Right lobe of liver (tissue), 6 donors: ENCODE measurements at regions of chr1 and their contacts with region 1.

Region 1: DNA sequence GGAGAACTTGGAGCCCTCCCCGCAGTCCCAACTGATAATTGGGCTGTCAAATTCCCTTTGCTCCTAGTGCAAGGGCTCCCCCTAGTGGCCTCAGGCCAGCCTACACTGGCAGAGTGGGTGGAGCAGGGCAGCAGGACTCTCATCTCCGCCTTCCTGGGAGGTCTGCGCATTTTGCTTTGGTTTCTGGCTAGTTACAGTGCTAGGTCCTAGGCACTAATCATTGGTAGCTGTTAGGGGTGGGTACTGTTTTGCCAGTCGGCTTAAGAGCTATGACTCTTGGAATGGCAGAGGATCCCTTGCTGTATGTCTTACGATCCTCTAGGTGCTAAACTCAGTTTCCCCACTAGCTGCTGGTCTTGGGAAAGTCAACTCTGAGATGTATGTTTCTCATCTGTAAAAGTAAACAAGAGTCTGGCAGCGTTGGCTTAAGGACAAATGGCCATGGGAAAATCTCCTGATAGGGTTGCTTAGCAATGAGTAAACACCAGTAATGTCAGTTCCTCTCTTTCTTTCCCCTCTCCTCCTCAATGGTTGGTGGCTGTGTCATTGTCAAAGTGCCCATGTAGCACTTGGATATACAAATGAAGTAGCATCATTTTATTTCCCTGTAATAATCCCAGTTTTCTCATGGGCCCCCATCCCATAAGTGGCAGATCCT is 2.1 kb upstream of the FYB2 start:
- DNase-seq: peak; percentile 86 to 92 (median 88)
- ATAC-seq: peak; percentile 53 to 67 (median 62)
- H3K4me3 ChIP-seq: no peak overlapping the region
- H3K27ac ChIP-seq: peak overlapping the region in 1 of 3 donors; percentile 95
- H3K4me1 ChIP-seq: peaks cover 0 to 25% (median 11%) of the 10 kb centered on the region in 4 donors
- H3K27me3 ChIP-seq: no peaks in the 10 kb centered on the region
- CTCF ChIP-seq: peak; percentile 95 to 99 (median 98)
- POLR2A ChIP-seq: no peak

Region 2: DNA sequence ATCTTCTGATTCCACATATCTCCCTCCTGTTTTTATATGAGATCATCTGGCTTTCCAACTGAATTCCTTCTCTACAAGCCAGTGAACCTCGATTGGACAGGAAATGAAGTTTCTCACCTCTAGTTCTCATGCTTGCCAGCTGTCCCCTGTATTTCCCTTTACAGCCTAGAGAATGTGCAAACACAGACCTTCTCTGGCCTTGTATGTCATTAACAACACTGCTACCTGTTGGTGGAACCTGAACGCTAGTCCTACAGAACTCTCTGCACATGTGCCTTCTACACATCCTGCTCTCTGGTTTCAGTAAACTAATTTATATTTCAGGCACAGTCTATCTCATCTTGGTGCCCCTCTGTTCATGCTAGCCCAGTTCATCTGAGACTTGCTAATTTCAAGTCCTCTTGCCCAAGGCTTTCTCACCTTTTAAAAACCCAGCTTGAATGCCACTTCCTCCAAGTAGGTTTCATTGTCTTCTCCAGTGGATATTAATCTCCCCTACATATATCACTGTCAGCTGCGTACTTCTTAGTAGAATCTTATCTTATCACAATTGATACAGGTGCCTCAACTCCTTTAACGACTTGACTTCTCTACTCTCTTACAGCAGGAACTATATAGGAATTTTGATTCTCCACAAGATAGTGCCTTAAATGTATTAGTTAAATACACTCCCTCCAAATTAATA is 791.8 kb before region 1 on chr1:
- intact Hi-C with region 1: no loop called
- DNase-seq: no peak
- ATAC-seq: no peak
- H3K4me3 ChIP-seq: no peak overlapping the region
- H3K27ac ChIP-seq: no peak overlapping the region
- H3K4me1 ChIP-seq: no peaks in the 10 kb centered on the region
- H3K27me3 ChIP-seq: no peaks in the 10 kb centered on the region
- CTCF ChIP-seq: no peak
- POLR2A ChIP-seq: no peak

Region 3: GRCh38 chr1:57058652-57059501 is 237.6 kb after region 1 on chr1:
- intact Hi-C with region 1: loop called in 1 of 2 experiments (anchors 10 kb)
- DNase-seq: peak in 1 of 3 donors; percentile 55
- ATAC-seq: peak; percentile 61 to 75 (median 70)
- H3K4me3 ChIP-seq: no peak overlapping the region
- H3K27ac ChIP-seq: peak overlapping the region; percentile 2 to 26 (median 8)
- H3K4me1 ChIP-seq: peaks cover 0 to 10% (median 3%) of the 10 kb centered on the region in 4 donors
- H3K27me3 ChIP-seq: no peaks in the 10 kb centered on the region
- CTCF ChIP-seq: peak in 1 of 4 donors; percentile 4
- POLR2A ChIP-seq: no peak

Region 4: DNA sequence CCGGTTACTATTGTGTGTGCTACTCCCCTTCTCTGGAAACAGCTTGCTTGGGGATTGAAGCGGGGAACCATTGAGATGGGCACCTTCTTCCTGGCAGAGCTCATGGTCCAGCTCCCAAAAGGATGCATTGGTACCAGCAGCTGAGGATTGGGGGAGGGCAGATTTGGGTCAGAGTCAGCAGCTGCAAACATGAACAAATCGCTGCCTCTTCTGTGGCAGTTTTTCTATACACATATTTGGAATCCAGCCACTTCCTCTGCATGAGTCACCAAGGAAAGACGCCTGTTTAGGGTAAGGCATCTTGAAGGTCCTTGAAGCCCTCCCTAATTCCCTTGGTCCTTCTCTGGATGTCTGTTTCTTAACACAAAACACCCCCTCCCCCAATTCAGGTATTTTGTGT is 497.9 kb after region 1 on chr1:
- intact Hi-C with region 1: no loop called
- DNase-seq: no peak
- ATAC-seq: no peak
- H3K4me3 ChIP-seq: no peak overlapping the region
- H3K27ac ChIP-seq: no peak overlapping the region
- H3K4me1 ChIP-seq: no peaks in the 10 kb centered on the region
- H3K27me3 ChIP-seq: no peaks in the 10 kb centered on the region
- CTCF ChIP-seq: no peak
- POLR2A ChIP-seq: no peak